Vagina (tissue), 2 donors: ENCODE measurements at regions of chr3 and their contacts with region 1.

Region 1: DNA sequence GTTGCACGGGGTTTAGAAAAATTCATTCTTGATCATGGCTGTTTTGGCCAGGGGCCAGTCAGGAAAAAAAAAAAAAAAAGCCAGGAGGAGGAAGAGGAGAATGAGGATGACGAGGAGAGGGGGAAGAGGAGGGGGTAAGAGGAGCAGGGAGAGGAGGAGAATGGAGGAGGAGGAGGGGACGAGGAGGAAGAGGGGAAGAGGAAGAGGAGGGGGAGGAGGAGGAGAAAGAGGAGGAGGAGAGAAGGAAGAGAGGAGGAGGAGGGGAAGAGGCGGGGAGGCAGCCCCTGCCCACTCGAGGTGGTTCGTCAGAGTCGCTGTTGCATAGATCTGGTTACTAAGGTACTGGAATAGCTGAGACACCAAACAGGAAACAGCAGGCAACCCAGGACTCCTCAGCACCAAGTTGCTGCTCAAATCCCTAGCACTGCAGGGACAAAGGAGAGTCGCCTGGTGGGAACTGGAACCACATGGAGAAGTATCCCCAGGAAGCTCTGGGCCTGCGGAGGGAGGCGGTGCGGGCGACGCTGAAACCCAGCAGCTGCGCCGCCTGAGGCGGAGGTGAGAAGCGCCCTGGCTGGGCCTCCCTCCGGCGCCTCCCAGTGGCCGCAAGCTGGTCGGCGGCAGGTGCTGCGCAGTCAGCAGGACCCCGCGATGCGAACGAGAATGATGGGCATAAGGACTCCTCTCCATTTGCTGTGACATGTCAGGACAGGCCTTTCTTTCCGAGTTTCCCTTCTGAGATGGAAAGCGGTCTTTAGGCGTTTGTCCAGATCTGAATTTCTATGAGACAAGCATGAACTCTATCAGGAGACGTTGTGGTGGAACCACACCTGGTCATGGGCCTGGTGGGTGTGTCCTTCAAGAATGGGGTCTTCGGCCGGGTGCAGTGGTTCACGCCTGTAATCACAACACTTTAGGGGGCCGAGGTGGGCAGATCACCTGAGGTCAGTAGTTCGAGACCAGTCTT is 17.5 kb downstream of the FAM240A start:
- DNase-seq: no peak
- H3K4me3 ChIP-seq: peak overlapping the region; percentile 32 to 44
- H3K27ac ChIP-seq: peak overlapping the region; percentile 86
- H3K4me1 ChIP-seq: peaks cover 32% of the 10 kb centered on the region
- H3K27me3 ChIP-seq: no peaks in the 10 kb centered on the region
- CTCF ChIP-seq: peak; percentile 76 to 96 (median 92)
- POLR2A ChIP-seq: no peak

Region 2: DNA sequence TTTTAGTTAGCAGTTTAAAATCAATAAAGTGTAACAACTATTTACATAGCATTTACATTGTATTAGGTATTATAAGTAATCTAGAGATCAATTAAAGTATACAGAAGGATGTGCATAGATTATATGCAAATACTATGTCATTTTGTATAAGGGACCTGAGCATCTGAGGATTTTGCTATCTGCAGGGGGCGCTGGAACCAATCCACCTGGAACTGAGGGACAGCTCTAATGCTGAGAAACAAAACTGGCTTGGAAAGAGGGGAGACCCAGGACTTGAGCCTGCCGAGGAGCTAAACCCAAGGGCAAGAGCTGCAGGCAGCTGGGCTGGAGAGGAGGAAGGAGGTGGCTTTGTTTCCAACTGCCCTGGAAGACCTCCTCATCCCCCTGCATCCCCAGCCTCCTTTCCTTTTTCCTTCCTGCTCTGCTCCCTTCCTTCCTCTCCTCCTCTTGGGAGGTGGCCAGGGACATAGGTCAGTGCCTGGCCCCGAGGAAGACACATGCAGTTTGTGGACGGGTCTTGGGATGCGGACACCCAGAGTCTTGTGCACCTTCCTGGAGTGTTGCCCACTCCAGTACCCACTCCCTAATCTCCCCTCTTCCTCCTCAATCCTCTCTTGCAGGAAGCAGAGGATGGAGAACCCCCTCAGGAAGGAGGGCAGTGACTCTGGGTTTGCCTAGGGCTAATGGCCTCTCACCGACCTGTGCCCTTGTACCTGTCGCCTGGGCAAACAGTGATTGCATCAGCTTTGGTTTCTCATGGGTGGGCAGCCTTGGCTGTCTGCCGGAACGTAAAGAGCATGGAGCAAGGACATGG is 132.9 kb before region 1 on chr3:
- intact Hi-C with region 1: loop called (anchors 5 kb)
- DNase-seq: peak in 1 of 2 donors; percentile 77
- H3K4me3 ChIP-seq: no peak overlapping the region
- H3K27ac ChIP-seq: no peak overlapping the region
- H3K4me1 ChIP-seq: no peaks in the 10 kb centered on the region
- H3K27me3 ChIP-seq: no peaks in the 10 kb centered on the region
- CTCF ChIP-seq: peak in 1 of 3 experiments; percentile 9
- POLR2A ChIP-seq: no peak

Region 3: DNA sequence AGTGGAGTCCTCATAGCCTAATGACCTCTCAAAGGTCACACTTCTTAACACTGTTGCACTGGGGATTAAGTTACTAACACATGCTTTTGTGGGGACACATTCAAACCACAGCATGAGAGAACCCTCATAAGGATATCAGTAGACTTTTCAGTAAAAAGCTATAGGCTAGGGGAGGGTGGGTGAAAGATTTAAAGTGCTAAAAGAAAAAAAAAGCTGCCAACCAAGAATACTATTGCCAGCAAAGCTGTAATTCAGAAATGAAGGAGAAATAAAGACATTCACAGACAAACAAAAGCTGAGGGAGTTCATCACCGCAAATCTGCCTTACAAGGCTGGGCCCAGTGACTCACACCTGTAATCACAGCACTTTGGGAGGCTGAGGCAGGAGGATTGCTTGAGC is 138.2 kb after region 1 on chr3:
- intact Hi-C with region 1: no loop called
- DNase-seq: no peak
- H3K4me3 ChIP-seq: no peak overlapping the region
- H3K27ac ChIP-seq: no peak overlapping the region
- H3K4me1 ChIP-seq: no peaks in the 10 kb centered on the region
- H3K27me3 ChIP-seq: no peaks in the 10 kb centered on the region
- CTCF ChIP-seq: no peak
- POLR2A ChIP-seq: no peak